ENCODE measurements at regions of chr1 and their contacts with region 1.

Region 1: DNA sequence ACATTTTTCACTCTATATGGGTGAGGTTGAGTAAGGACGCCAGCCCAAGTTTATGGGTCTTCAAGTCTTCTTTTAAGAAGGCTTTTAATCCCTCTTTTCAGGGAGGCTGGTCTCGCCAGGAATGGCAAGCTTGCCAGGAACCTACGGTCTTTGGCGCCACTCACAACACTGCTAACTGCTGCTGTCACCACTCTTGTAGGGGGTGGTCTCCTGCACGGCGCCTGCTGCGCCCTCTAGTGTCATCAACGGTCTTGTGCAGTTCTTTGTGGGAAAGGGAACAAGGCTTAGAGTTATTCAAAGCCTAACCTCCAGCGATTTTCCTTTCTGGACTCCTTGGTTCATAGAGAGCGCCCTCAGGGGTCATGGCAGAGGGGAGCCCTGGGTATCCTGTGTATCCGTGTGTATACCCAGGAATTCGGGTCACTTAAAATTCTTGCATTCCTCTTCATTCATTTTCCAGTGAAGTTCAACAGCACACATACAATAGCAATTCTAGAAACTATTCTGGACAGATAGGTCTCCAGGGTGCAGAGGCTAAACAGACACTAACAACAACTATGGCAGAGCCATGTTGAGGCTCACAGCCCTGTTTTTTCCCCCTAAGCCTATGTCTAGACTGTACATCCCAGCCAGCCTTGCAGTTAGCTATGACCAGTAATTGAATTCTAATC is 392.8 kb upstream of the CAMK1G start:
- ATAC-seq: peak; percentile 79 to 100 (median 99)
- H3K4me3 ChIP-seq: no peak overlapping the region
- H3K27ac ChIP-seq: no peak overlapping the region
- H3K4me1 ChIP-seq: peaks cover 0 to 5% of the 10 kb centered on the region in 2 donors

Region 2: GRCh38 chr1:208652296-208653160 is 538.2 kb before region 1 on chr1:
- in situ Hi-C with region 1: loop called in 1 of 9 experiments (anchors 25 kb)
- ATAC-seq: peak; percentile 80 to 99 (median 96)
- H3K4me3 ChIP-seq: no peak overlapping the region
- H3K27ac ChIP-seq: peak overlapping the region in 1 of 2 donors; percentile 1
- H3K4me1 ChIP-seq: peaks cover 16 to 36% of the 10 kb centered on the region in 2 donors

Region 3: DNA sequence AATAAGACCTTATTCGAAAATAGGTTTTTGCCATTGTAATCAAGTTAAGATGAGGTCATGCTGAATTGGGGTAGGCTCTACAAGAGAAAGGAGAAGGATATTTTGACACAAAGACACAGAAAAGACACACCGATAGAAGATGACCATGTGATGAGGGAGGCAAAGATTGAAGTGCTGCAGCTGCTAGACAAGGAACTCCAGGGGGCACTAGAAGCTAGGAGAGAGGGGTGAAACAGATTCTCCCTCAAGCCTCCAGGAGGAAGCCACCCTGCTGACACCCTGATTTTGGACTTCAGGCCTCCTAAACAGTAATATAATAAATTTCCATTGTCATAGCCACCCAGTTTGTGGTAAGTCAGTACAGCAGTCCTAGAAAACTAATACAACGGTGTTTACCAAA is 114.0 kb before region 1 on chr1:
- in situ Hi-C with region 1: loop called in 1 of 9 experiments (anchors 10 kb)
- ATAC-seq: peak in 3 of 8 experiments; percentile 35 to 66 (median 57)
- H3K4me3 ChIP-seq: no peak overlapping the region
- H3K27ac ChIP-seq: no peak overlapping the region
- H3K4me1 ChIP-seq: peaks cover 0 to 3% of the 10 kb centered on the region in 2 donors